Posterior vena cava (tissue), 2 donors: ENCODE measurements at regions of chr5 and their contacts with region 1.

Region 1: GRCh38 chr5:159944056-159944455 is 27.8 kb downstream of the ADRA1B start:
- DNase-seq: no peak

Region 2: GRCh38 chr5:159902444-159903121 is 41.5 kb before region 1 on chr5:
- intact Hi-C with region 1: loop called in 1 of 2 experiments (anchors 1 kb)
- DNase-seq: no peak